Lower lobe of right lung (tissue), 2 donors: ENCODE measurements at regions of chr17 and their contacts with region 1.

Region 1: DNA sequence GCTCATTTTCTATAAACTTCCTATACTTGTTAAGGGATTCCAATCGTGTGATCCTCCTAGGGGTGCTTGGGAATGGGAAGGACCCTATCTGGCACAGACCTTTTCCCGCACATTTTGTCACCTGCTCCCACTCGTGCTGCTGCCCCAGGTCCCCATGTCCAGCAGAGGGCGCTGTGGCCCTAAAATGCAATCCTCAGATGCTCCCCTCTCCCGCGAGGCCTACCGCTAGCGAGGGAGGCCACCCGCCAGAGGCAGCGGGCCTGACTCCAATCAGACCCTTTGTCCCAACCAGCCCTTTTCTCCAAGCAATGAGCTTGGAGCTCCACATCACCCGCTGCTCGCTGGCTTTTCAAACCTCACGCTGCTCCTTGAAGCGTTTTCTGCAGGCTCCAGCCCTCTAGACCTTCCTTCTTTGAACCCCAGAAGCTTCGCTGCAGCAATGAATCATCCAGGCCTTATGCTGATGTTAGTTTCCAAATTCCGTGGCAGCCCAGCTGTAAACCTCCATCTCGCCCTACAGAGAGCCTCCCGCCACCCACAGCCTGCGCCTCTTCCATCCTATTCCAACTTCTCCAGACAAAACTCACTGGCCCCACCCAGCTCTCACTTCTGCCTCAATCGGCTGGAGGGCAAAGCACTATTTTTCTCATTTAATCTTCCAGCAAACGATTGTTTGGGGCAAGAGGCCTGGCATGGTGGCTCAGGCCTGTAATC is 23.6 kb upstream of the FZD2 start:
- DNase-seq: peak; percentile 89
- ATAC-seq: peak; percentile 94 to 96
- H3K4me3 ChIP-seq: no peak overlapping the region
- H3K27ac ChIP-seq: peak overlapping the region; percentile 9
- H3K4me1 ChIP-seq: peaks cover 12% of the 10 kb centered on the region
- H3K27me3 ChIP-seq: no peaks in the 10 kb centered on the region
- CTCF ChIP-seq: peak; percentile 96

Region 2: GRCh38 chr17:44304651-44305050 is 229.0 kb before region 1 on chr17:
- intact Hi-C with region 1: no loop called
- DNase-seq: no peak
- ATAC-seq: no peak
- H3K4me3 ChIP-seq: no peak overlapping the region
- H3K27ac ChIP-seq: no peak overlapping the region
- H3K4me1 ChIP-seq: peaks cover 19% of the 10 kb centered on the region
- H3K27me3 ChIP-seq: peaks cover 40% of the 10 kb centered on the region
- CTCF ChIP-seq: no peak

Region 3: GRCh38 chr17:44400226-44400847 is 133.4 kb before region 1 on chr17:
- intact Hi-C with region 1: no loop called
- DNase-seq: no peak
- ATAC-seq: no peak
- H3K4me3 ChIP-seq: no peak overlapping the region
- H3K27ac ChIP-seq: no peak overlapping the region
- H3K4me1 ChIP-seq: no peaks in the 10 kb centered on the region
- H3K27me3 ChIP-seq: no peaks in the 10 kb centered on the region
- CTCF ChIP-seq: no peak

Region 4: DNA sequence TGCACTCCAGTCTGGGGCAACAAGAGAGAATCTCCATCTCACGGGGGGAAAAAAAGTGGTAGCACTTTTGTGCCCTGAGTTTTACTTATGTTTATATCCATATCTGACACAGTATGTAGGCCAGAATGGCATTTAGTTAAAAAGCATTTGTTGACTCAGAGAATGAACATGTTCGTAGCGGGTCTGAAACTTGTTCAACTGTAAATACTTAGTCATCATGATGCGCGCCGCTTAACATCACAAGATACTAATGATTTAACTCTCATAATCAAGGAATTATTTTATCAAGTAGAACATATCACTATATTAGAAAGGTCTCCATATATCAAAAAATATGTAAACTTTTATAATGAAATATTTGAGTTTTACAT is 89.0 kb before region 1 on chr17:
- intact Hi-C with region 1: no loop called
- DNase-seq: no peak
- ATAC-seq: no peak
- H3K4me3 ChIP-seq: no peak overlapping the region
- H3K27ac ChIP-seq: no peak overlapping the region
- H3K4me1 ChIP-seq: peaks cover 2% of the 10 kb centered on the region
- H3K27me3 ChIP-seq: no peaks in the 10 kb centered on the region
- CTCF ChIP-seq: no peak

Region 5: DNA sequence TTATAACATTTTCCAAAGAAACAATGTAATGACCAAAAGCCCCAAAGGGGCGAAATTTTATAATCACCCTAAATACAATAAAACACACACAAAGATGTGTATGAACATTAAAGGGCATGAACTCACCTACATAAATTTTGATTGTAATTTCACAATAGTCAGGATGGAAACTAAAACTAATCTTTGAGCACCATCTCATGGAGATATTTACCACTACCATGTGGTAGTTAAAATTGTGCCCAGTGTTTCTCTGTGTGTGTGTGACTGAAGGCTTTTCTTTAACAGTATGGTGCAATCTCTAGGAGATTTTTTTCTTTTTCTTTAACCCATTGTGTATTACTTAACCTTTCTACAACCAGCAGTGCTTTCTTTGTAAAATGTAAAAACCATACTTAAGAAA is 102.9 kb after region 1 on chr17:
- intact Hi-C with region 1: loop called (anchors 5 kb)
- DNase-seq: no peak
- ATAC-seq: peak in 1 of 2 donors; percentile 49
- H3K4me3 ChIP-seq: no peak overlapping the region
- H3K27ac ChIP-seq: no peak overlapping the region
- H3K4me1 ChIP-seq: no peaks in the 10 kb centered on the region
- H3K27me3 ChIP-seq: peaks cover 14% of the 10 kb centered on the region
- CTCF ChIP-seq: peak; percentile 43